WTC11 (cell line): ENCODE measurements at regions of chr16 and their contacts with region 1.

Region 1: DNA sequence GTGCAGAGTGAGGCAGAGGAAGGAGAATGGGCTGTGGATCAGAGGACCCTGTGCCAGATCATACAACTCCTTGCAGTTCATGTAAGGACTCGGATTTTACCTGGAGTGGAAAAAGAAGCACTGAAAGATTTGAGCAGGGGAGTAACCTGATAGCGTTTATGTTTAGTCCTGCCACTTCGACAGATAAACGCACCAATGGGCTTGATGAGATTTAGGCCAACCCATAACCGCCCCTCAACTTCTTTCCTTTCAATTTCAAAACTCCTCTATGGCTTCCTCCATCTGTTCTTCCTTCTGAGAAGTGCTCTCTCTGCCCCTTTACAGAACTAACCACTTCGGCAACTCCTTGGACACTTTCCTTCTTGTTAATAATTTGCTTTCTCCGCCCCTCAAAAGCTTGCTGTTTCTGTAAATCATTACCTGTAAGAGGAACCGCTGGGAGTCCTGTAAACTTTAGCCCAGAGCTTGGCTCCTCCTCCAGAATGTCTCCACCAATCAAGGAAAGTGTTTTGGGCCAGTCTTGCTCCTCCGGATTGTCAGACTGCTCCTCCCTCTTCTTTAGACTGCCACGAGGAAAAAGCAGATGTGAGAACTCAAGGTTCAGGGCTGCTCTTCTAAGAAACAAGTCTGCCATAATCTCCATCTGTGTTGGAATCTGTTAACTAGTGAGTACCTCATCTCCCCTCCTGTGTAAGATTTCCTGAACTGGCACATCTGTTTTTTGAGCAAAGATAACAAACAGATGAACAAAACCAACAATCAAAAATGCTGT is at the start of gene ACSM3:
- DNase-seq: peak; percentile 39
- ATAC-seq: peak; percentile 99
- H3K4me3 Mint-ChIP-seq: peak within 1 kb of the TSS; percentile 79
- H3K27ac Mint-ChIP-seq: peak within 1 kb of the TSS; percentile 75; the same call in 1 of the 2 replicates
- H3K4me1 Mint-ChIP-seq: peaks cover 18% of the 10 kb centered on the region
- H3K27me3 Mint-ChIP-seq: peaks cover 6% of the 10 kb centered on the region
- CTCF ChIP-seq: no peak
- total RNA-seq, gene ACSM3: 5.0 to 6.5 TPM (median 6.5 TPM) in 3 replicates

Region 2: GRCh38 chr16:20774703-20775362 is 11.2 kb after region 1 on chr16:
- CTCF ChIA-PET with region 1: interaction called, 19 read pairs
- POLR2A ChIA-PET with region 1: no interaction called
- DNase-seq: peak; percentile 91
- ATAC-seq: peak; percentile 100
- H3K4me3 Mint-ChIP-seq: no peak overlapping the region
- H3K27ac Mint-ChIP-seq: no peak overlapping the region
- H3K4me1 Mint-ChIP-seq: no peaks in the 10 kb centered on the region
- H3K27me3 Mint-ChIP-seq: no peaks in the 10 kb centered on the region
- CTCF ChIP-seq: peak; percentile 65; the same call in 1 of the 2 replicates